Activated CD4-positive, alpha-beta memory T cell treated with anti-CD3 and anti-CD28 coated beads for 36 hours (primary cell): ENCODE measurements at regions of chr1 and their contacts with region 1.

Region 1: DNA sequence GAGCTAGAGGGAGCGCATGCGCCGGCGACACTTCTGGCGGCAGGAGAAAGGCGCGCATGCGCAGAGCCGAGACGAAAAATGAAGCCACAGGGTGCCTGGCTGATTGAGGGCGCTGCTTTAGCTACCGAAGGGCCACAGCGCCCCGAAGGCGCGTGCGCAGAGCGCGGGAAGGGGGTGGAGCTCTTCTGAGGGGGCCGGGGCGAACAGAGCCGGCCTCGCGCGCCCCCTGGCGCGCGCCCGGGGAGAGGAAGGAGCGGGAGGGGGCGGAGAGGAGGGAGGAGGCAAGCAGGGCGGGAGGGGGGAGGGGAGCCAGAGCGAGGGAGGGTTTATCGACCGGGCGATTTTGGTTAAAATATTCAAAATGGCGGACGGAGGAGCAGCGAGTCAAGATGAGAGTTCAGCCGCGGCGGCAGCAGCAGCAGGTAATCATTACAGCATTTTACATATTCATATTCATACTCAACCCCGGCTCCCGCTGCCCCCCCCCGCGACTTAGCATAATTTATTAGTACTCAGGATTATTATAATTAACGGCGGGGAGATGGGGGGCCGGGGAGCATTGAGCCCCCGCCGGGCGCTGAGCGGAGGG is at the start of gene POU2F1:
- DNase-seq: peak; percentile 99
- H3K4me3 Mint-ChIP-seq: peak within 1 kb of the TSS; percentile 95
- H3K27ac Mint-ChIP-seq: peak within 1 kb of the TSS; percentile 98
- H3K4me1 Mint-ChIP-seq: peaks cover 45% of the 10 kb centered on the region
- H3K27me3 Mint-ChIP-seq: peaks cover 1% of the 10 kb centered on the region
- total RNA-seq, gene POU2F1: 17.7 to 20.1 TPM

Region 2: DNA sequence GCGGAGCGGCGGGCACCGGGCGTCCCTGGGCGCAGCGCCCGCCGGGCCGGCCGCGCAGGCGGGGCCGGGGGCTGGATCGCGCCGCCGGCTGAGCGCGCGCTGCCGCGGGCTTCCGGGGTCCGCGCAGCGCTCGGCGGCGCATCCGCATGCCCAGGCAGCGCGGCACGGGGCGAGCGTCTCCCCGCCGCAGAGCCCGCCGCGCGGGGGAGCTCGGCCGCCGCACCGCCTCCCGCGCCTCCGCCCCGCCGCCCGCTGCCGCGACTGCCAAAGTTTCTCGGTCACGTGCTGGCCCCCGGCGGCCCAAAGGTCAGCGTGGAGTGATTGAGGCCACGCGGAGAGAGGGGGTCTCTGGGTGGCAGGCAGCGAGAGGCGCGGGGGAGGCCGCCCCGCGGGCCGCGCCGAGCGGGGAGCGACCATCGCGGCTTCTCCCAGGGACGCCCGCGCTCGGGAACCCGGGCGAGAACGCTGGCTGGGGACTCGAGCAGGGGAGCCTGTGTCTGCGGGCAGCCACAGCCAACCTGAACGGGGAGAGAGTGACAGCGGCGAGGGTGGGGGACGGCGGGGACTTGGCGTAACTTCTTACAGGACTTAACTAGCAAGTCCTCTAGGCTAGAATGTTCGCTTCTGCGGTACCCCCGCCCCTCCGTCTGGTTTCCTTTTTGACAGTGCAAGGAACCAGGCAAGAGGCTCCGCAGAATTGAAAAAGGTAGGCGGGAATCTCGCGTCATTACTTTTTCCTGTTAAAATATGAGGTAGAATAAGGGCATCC is 245.1 kb before region 1 on chr1 and contains the start of gene ILDR2:
- CTCF ChIA-PET with region 1: no interaction called
- POLR2A ChIA-PET with region 1: interaction called, 3 read pairs
- intact Hi-C with region 1: loop called (anchors 5 kb)
- DNase-seq: peak; percentile 88
- H3K4me3 Mint-ChIP-seq: peak within 1 kb of the TSS; percentile 88
- H3K27ac Mint-ChIP-seq: peak within 1 kb of the TSS; percentile 88
- H3K4me1 Mint-ChIP-seq: peaks cover 47% of the 10 kb centered on the region
- H3K27me3 Mint-ChIP-seq: peaks cover 16% of the 10 kb centered on the region
- total RNA-seq, gene ILDR2: 12.5 to 13.0 TPM

Region 3: DNA sequence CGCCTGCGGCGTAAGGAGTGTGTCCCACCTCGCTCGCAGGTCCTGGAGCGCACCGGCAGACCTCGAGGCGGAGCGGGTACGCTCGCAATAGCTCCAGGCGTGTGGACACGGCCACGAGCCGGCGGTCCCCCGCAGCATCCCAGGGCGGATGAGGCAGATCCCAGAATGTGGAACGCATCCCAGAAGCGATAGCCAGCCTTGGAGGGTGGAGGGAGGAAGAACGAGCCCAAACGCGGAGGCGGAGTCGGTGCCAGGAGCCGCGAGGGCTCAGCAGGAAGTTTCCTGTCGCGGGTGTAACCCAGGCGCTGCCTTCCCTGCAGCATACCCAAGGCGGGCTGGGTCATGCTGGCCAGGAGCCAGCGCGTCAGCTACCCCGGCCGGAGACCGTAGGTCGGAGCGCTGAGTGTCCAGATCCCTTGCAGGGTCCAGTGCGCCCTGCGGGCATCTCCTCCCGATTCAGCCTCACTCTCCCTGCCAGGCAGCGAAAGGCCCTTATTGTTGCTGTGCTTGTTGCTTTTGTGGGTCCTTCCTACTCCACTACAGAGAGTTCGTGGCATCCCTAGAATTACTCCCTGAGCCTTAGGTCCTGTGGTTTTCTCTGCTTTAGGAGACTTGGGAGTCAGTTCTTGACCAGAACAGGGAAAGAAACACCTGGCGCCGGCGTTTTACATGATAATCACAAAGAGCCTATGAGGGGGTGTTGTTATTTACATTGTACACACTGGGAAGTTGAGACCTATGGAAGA is 99.1 kb before region 1 on chr1:
- CTCF ChIA-PET with region 1: interaction called, 8 read pairs
- POLR2A ChIA-PET with region 1: no interaction called
- intact Hi-C with region 1: loop called (anchors 5 kb)
- DNase-seq: peak; percentile 51
- H3K4me3 Mint-ChIP-seq: peak overlapping the region; percentile 74
- H3K27ac Mint-ChIP-seq: no peak overlapping the region
- H3K4me1 Mint-ChIP-seq: peaks cover 5% of the 10 kb centered on the region
- H3K27me3 Mint-ChIP-seq: no peaks in the 10 kb centered on the region

Region 4: GRCh38 chr1:167442124-167442848 is 221.7 kb after region 1 on chr1:
- CTCF ChIA-PET with region 1: interaction called, 10 read pairs
- POLR2A ChIA-PET with region 1: no interaction called
- intact Hi-C with region 1: loop called (anchors 1 kb)
- DNase-seq: peak; percentile 91
- H3K4me3 Mint-ChIP-seq: no peak overlapping the region
- H3K27ac Mint-ChIP-seq: peak overlapping the region; percentile 64
- H3K4me1 Mint-ChIP-seq: peaks cover 71% of the 10 kb centered on the region
- H3K27me3 Mint-ChIP-seq: no peaks in the 10 kb centered on the region

Region 5: DNA sequence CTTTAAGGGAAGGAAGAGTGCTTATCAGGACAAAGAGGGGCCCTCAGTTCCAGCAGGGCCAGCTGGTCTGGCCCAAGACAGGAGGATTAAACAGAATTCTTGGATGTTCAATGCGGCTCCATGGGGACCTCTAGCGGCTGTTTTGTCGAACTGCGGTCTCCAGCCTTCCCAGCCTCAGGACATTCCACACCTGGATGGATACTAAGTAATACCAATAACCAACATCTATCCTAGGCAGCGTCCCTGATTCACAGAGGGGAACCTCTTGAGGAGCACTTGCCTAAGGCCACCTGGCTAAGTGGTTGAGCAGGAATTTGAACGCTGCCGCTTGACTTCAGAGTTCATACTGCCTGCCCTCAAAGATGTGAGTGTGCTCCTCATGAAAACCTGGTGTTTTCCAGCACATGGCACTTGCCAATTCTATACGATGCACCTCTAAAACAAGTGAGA is 313.2 kb after region 1 on chr1:
- CTCF ChIA-PET with region 1: interaction called, 10 read pairs
- POLR2A ChIA-PET with region 1: no interaction called
- intact Hi-C with region 1: no loop called
- DNase-seq: peak; percentile 76
- H3K4me3 Mint-ChIP-seq: no peak overlapping the region
- H3K27ac Mint-ChIP-seq: no peak overlapping the region
- H3K4me1 Mint-ChIP-seq: peaks cover 4% of the 10 kb centered on the region
- H3K27me3 Mint-ChIP-seq: no peaks in the 10 kb centered on the region

Region 6: GRCh38 chr1:167936068-167936929 is 715.7 kb after region 1 on chr1 and contains the start of gene DCAF6:
- CTCF ChIA-PET with region 1: interaction called, 3 read pairs
- POLR2A ChIA-PET with region 1: no interaction called
- intact Hi-C with region 1: loop called (anchors 5 kb)
- DNase-seq: peak; percentile 98
- H3K4me3 Mint-ChIP-seq: peak within 1 kb of the TSS; percentile 91
- H3K27ac Mint-ChIP-seq: peak within 1 kb of the TSS; percentile 100
- H3K4me1 Mint-ChIP-seq: peaks cover 35% of the 10 kb centered on the region
- H3K27me3 Mint-ChIP-seq: no peaks in the 10 kb centered on the region
- total RNA-seq, gene DCAF6: 21.2 to 25.0 TPM